ENCODE measurements at regions of chr11 and their contacts with region 1.

Region 1: DNA sequence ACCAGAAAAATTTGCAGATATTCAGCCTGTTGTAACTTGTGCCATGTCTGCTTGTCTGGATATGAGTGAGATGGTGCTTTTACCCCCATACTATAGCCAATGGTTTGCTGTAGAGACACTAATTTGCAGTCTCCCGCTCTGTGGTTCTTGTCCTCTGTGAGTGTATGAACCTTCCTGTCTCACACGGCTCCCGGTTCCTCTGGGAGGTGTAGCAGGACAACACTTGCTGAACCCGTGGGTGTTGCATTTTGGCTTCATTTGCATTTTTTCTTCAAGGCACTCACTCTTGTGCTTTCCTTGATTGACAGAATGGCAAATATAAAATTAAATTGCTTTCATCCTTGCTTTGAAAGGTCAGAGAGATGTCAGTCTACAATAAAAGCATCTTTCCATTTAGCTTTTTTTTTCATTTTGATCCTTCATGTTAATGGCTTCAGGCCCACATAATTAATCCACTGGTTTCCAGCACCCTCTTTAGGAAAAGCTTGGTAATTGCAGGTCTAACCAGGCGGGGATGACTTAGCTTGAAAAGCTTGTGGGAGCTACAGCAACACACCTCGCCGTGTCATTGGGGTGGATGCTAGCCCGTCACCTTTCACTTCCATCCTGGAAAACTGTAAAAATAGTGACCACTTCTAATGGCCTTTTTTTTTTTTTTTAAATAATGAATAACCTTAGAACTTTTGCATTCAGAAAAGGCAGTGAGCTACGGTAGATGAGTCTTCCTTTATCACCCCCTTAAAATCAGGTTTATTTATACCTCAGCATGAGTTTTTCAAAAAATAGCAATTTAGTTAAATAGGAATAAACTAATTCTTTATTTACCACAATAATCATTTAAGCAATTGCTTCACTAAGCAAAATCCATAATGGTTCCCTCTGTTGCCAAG is 27.4 kb upstream of the ST14 start:
- DNase-seq: peak in 2 of 4 donors; percentile 52 to 71
- ATAC-seq: peak; percentile 93
- H3K4me3 ChIP-seq: no peak overlapping the region
- H3K27ac ChIP-seq: no peak overlapping the region
- H3K4me1 ChIP-seq: no peaks in the 10 kb centered on the region
- H3K27me3 ChIP-seq: no peaks in the 10 kb centered on the region
- CTCF ChIP-seq: peak; percentile 75 to 87

Region 2: DNA sequence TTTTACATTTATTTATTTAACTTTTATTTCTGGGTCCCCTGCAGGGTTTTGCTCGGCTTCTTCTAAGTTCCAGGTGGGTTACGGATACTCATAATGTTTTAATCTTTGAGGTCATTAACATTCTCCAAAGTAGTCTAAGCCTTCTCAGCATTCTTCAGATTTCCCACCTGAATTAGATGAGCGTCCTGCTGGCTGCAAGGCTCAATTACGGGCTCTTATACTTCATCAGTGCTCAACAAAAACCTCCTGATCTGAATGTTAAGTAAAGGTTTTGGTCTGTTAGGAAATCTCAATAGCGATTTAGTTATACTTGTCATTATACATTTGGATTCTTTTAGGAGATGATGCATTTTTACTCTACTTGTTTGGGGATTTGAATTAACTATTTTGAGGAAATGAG is 209.5 kb before region 1 on chr11:
- intact Hi-C with region 1: loop called in 1 of 2 experiments (anchors 5 kb)
- DNase-seq: no peak
- ATAC-seq: no peak
- H3K4me3 ChIP-seq: no peak overlapping the region
- H3K27ac ChIP-seq: no peak overlapping the region
- H3K4me1 ChIP-seq: no peaks in the 10 kb centered on the region
- H3K27me3 ChIP-seq: no peaks in the 10 kb centered on the region
- CTCF ChIP-seq: no peak

Region 3: GRCh38 chr11:130055617-130056016 is 76.6 kb before region 1 on chr11:
- intact Hi-C with region 1: no loop called
- DNase-seq: peak in 1 of 4 donors; percentile 49
- ATAC-seq: peak; percentile 21
- H3K4me3 ChIP-seq: no peak overlapping the region
- H3K27ac ChIP-seq: no peak overlapping the region
- H3K4me1 ChIP-seq: peaks cover 0 to 11% of the 10 kb centered on the region in 2 donors
- H3K27me3 ChIP-seq: peaks cover 0 to 6% of the 10 kb centered on the region in 2 donors
- CTCF ChIP-seq: no peak

Region 4: DNA sequence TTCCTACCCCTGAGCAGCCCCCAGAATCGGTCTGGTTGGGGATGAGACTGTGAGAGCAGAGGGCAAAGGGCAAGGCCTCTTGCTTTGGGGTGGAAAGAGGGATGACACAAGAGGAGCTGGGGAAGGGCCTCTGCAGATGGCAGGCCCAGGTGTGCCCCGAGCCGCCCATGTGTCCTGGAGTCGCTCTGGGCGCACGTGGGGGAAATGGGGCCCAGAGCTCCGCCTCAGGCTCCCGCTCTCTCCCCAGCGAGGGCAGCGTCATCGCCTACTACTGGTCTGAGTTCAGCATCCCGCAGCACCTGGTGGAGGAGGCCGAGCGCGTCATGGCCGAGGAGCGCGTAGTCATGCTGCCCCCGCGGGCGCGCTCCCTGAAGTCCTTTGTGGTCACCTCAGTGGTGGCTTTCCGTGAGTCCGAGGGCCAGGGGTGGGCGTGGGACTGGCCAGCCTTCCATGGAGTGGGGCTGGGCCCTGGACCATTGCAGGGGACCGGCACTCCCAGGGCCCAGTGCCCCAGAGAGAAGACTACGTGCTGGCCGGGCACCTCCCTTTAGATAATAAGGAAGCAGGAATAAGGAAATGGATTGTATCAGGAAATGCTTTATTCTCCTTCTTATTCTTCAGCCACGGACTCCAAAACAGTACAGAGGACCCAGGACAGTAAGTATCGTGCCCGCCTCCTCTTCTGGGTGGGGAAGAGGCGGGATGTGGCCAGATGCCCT is 57.4 kb after region 1 on chr11:
- intact Hi-C with region 1: no loop called
- DNase-seq: peak in 1 of 4 donors; percentile 80
- ATAC-seq: peak; percentile 8
- H3K4me3 ChIP-seq: no peak overlapping the region
- H3K27ac ChIP-seq: no peak overlapping the region
- H3K4me1 ChIP-seq: peaks cover 0 to 4% of the 10 kb centered on the region in 2 donors
- H3K27me3 ChIP-seq: no peaks in the 10 kb centered on the region
- CTCF ChIP-seq: no peak